ENCODE measurements at regions of chr5 and their contacts with region 1.

Region 1: DNA sequence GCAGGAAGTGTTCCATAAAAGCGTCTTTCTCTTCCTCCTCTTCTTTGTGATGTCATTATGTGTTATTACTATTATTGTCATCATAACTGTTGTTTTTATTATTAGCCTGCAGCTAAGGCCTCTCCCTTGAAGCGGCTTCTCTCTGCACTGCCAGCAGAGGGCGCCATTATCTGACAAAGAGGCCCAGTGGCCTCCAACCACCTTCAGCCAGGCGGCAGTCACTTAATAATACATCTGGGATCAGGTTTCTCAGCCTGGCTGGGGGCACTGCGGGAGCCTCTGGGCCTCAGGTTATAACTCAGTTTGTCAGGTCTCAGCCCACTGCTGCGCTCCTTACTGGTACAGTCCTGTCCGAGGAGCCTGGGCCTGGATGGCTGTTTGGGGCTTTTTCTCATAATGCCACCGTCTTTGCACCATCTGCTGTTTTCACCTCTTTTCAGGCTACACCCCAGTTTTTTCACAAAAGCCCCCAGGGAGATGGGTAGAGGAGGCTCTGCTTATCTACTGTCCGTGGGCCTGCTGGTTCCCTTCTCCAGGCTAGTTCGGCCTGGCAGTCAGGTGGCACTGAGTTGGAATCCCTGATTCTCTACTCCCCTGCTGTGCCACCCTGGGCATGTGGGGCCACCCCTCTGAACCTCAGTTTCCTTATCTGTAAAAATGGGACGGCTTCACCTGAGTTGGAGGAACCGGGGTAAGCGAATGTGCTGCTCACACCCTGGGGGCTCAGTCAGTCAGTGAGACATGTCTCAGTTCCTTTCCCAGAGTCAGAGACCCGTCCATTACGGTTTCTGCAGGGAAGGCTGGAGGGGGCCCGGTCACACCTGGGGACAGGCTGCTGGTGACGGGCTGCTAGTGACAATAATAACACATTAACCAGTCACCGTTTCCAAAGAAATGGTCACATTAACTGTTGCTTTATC is 282.1 kb downstream of the NSG2 start:
- DNase-seq: peak in 4 of 5 donors; percentile 29 to 78 (median 60)
- ATAC-seq: peak; percentile 15 to 84 (median 67)
- H3K4me3 ChIP-seq: no peak overlapping the region
- H3K27ac ChIP-seq: no peak overlapping the region
- H3K4me1 ChIP-seq: no peaks in the 10 kb centered on the region
- H3K27me3 ChIP-seq: peaks cover 0 to 41% (median 4%) of the 10 kb centered on the region in 9 donors
- CTCF ChIP-seq: peak; percentile 43 to 72 (median 62)
- POLR2A ChIP-seq: no peak

Region 2: GRCh38 chr5:174045470-174046025 is 282.0 kb before region 1 on chr5 and contains the start of gene NSG2:
- intact Hi-C with region 1: no loop called
- DNase-seq: peak; percentile 78 to 89 (median 87)
- ATAC-seq: peak; percentile 98 to 100 (median 99)
- H3K4me3 ChIP-seq: no peak within 1 kb of the TSS
- H3K27ac ChIP-seq: no peak within 1 kb of the TSS
- H3K4me1 ChIP-seq: no peaks in the 10 kb centered on the region
- H3K27me3 ChIP-seq: peaks cover 0 to 10% (median 0%) of the 10 kb centered on the region in 9 donors
- CTCF ChIP-seq: peak; percentile 43 to 81 (median 66)
- POLR2A ChIP-seq: no peak
- total RNA-seq, gene NSG2: 0.36 to 1.7 (median 0.50) TPM in 5 of 9 donors, not detected in the others

Region 3: DNA sequence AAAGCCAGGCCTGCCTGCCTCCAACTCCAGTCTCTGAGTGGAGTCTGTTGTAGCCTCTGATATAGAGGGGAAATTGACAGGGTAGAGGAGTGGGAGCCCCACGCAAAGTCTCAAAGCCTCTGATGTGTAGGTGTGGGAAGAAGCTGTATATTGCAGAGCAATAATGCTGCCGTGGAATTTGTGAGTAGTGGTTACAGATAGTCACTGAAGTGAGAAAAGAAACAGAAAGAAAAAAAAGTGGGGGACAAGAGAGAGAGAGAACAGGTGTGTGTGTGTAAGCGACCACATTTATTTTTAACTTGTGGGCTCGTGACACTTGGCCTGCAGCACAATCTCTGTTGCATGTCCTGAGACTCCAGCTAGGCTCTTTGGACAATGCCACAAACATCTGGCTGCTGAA is 54.3 kb before region 1 on chr5:
- intact Hi-C with region 1: no loop called
- DNase-seq: no peak
- ATAC-seq: no peak
- H3K4me3 ChIP-seq: no peak overlapping the region
- H3K27ac ChIP-seq: no peak overlapping the region
- H3K4me1 ChIP-seq: no peaks in the 10 kb centered on the region
- H3K27me3 ChIP-seq: no peaks in the 10 kb centered on the region
- CTCF ChIP-seq: no peak
- POLR2A ChIP-seq: no peak

Region 4: DNA sequence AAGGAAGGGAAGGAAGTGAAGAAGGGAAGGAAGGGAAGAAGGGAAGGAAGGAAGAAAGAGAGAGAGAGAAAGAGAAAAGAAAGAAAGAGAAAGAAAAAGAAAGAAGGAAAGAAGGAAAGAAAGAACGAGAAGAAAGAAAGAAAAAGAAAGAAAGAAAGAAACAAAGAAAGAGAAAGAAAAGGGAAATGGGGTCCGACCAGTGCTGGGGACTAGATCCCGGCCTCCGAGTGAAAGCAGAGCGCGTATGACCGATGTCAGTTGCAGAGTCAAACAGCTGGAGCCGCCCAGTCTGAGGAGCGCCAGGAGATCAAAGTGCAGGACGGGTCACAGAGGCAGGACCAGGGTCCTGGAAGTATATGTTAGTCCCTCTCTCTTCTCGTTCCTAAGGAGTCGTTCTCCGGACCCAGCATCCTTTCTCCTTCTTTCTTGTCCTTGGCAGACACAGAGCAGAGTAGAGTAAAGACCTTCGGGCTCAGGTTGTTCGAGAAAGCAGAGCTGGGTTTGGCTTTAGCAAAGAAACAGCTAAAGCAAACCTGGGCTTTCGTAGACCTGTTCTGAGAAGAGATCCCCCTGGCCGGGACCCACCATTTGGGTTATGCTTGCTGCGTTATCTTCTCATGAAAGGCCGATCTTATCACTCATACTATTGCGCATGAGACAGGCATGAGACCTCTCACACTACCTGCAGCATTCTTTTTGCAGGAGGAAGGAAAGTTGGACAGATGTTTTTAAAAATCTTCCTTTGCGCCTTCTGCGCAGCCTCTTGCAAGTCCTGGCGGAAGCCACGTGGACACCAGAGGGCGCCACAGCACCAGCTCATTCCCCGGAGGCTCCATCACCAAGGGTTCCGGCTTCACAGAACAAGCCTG is 91.6 kb after region 1 on chr5:
- intact Hi-C with region 1: loop called in 2 of 10 experiments (anchors 2 to 5 kb)
- DNase-seq: peak; percentile 80 to 90 (median 87)
- ATAC-seq: peak; percentile 69 to 97 (median 92)
- H3K4me3 ChIP-seq: peak overlapping the region in 7 of 12 donors; percentile 6 to 38 (median 25)
- H3K27ac ChIP-seq: no peak overlapping the region
- H3K4me1 ChIP-seq: peaks cover 0 to 10% (median 0%) of the 10 kb centered on the region in 12 donors
- H3K27me3 ChIP-seq: peaks cover 0 to 33% (median 11%) of the 10 kb centered on the region in 9 donors
- CTCF ChIP-seq: peak; percentile 75 to 94 (median 86)
- POLR2A ChIP-seq: no peak

Region 5: DNA sequence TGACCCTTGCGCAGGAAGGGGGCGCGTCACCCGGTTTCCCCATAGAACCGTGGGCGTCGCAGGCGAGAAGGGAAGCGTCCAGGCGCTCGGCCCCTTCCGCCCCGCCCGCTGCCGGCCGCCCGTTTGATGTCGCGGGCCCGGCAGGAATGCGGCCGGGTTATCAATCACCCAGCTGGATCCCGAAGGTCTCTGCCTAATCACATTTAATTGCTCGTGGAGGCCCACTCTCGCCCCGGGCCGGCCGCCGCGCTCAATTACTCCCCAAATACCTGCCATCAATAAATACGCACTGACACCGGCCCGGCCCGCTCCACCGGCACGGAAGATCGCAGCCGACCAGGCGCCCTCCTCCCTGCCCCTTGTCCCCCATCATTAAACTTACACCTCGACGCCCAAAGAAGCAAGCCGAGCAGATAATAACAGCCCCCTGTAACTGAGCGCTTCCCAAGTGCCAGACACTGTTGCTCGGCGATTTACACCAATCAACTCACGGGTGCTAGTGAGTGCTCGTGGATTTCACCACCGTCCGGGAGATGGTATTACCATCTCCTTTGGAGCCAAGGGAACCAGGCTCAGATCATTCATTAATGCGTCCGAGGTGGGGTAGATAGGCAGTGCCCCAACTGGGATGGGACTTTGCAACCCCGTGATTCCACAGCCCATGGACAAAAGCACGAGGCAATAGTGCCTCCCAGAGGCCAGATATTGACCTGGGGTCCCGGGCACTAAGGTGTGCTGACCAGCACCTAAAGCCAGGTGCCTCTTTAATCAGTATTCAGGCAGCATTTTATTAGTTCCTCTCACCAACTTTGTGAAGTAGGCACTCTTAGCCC is 408.1 kb after region 1 on chr5:
- intact Hi-C with region 1: loop called in 2 of 10 experiments (anchors 10 kb)
- DNase-seq: no peak
- ATAC-seq: no peak
- H3K4me3 ChIP-seq: peak overlapping the region in 2 of 12 donors; percentile 2 to 13
- H3K27ac ChIP-seq: no peak overlapping the region
- H3K4me1 ChIP-seq: peaks cover 0 to 14% (median 4%) of the 10 kb centered on the region in 12 donors
- H3K27me3 ChIP-seq: peaks cover 35 to 90% (median 66%) of the 10 kb centered on the region in 9 donors
- CTCF ChIP-seq: peak in 8 of 12 donors; percentile 14 to 41 (median 26)
- POLR2A ChIP-seq: no peak

Region 6: DNA sequence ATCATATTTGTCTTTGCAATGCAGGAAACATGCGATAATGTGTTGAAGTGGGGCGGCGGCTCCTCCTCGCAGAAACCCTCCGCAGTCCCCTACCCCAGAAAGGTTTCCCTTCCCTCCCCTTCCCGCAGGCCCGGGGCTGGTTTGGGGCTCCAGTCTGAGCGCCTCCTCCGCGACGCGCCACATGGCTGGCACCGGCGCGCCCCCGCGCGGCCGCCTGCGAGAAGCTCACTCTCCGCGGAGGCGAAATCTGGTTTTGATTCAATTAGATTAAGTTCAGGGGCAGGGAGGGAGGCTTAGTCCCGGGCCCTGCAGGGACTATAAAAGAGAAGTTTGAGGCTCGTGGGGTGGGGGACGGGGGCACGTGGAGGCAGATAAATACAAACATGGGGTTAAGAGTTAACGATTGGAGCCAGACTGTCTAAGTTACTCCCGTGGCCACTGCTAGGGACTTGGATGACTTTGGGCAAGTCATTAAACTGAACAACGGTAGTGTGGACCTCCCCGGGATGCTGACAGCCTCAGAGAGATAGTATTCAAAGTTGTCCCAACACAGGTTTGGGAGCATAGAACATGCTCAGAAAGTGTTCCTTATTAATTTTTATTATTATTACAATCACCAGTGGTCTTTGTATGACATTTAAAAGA is 466.2 kb after region 1 on chr5:
- intact Hi-C with region 1: loop called in 5 of 10 experiments (anchors 5 to 10 kb)
- DNase-seq: peak; percentile 37 to 76 (median 43)
- ATAC-seq: peak in 3 of 4 donors; percentile 57 to 88 (median 85)
- H3K4me3 ChIP-seq: no peak overlapping the region
- H3K27ac ChIP-seq: no peak overlapping the region
- H3K4me1 ChIP-seq: peaks cover 0 to 6% (median 0%) of the 10 kb centered on the region in 12 donors
- H3K27me3 ChIP-seq: peaks cover 0 to 51% (median 23%) of the 10 kb centered on the region in 9 donors
- CTCF ChIP-seq: peak; percentile 60 to 85 (median 76)
- POLR2A ChIP-seq: no peak

Region 7: DNA sequence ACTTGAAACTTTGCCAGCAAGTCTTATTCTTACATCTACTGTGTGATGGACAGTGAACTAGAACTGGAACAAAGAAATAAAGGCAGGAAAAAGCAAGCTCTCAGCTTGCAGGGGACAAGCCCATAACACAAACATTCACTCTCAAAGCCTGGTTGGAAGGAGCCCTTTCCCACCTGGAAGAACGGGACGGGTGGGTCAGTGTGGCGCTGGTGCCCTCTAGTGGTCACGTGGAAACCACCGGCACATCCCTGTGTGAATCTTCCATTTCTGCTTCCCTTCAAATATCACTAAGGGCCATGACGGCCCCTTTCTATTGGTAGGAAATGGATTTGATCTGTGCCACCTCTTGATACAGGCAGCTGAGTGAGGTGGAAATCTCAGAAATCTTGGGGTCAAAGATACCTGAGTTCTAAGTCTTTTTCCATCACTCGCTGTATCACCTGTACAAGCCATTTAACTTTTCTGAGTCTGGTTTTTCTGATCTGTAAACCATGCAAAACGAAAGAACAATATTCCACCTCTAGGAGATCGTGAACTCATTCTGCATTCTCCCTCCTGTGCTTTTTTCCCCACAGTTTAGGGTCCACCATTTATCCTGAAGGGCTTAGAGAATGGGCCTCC is 608.4 kb after region 1 on chr5:
- intact Hi-C with region 1: loop called in 1 of 10 experiments (anchors 10 kb)
- DNase-seq: peak; percentile 40 to 72 (median 46)
- ATAC-seq: peak in 3 of 4 donors; percentile 72 to 80 (median 80)
- H3K4me3 ChIP-seq: no peak overlapping the region
- H3K27ac ChIP-seq: no peak overlapping the region
- H3K4me1 ChIP-seq: no peaks in the 10 kb centered on the region
- H3K27me3 ChIP-seq: peaks cover 0 to 16% (median 0%) of the 10 kb centered on the region in 9 donors
- CTCF ChIP-seq: peak; percentile 75 to 93 (median 86)
- POLR2A ChIP-seq: no peak